Posterior cingulate gyrus (tissue), 11 donors: ENCODE measurements at regions of chr1 and their contacts with region 1.

Region 1: GRCh38 chr1:55284852-55285251 is 69.7 kb upstream of the USP24 start:
- DNase-seq: peak in 2 of 10 donors; percentile 11 to 32

Region 2: DNA sequence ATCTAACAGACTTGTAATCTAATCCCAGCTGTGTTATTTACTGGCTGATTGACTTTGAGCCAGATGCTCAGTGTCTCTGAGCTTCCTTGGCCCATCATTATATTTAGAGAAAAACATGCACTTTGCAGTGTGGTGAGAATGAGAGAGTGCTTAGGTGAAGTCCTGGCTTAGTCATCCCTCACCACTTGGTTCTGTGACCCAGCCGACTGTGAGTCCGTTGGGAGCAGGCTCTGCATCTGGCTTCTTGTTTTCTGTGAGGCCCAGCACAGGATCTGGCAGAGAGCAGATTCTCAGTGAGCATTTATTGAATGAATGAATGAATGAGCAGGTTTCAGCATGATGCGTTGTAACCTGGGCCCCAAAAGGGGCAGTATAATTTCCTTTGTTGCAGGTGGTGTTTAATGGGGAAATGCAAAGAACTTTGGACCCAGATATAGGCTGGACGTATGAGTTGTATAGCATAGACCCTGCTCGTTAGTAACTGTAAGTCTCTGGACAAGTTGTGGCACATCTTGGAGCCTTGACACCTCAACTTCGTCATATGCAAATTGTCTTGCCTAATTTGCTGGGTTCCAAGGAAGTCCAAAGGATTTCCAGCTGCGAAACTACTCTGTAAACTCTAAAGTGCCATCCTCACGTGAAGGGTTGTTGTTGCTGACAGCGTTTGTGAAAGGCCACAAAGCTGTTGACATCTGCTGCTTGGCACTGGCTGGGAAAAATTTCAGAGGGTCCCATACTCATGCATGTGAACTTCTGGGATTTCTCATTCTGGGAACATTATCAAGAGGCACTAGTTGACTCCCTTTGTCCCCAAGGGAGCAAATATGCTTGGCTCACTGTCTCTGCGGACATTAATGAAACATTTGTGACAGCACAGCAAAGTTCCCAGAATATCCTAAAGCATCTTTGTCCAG is 69.1 kb after region 1 on chr1:
- intact Hi-C with region 1: loop called (anchors 5 kb)
- DNase-seq: no peak

Region 3: GRCh38 chr1:56709269-56709880 is 1424.5 kb after region 1 on chr1:
- intact Hi-C with region 1: loop called (anchors 10 kb)
- DNase-seq: peak in 1 of 10 donors; percentile 8

Region 4: GRCh38 chr1:56821140-56821797 is 1536.4 kb after region 1 on chr1:
- intact Hi-C with region 1: loop called (anchors 10 kb)
- DNase-seq: peak; percentile 56 to 95 (median 81)